ENCODE measurements at regions of chr20 and their contacts with region 1.

Region 1: DNA sequence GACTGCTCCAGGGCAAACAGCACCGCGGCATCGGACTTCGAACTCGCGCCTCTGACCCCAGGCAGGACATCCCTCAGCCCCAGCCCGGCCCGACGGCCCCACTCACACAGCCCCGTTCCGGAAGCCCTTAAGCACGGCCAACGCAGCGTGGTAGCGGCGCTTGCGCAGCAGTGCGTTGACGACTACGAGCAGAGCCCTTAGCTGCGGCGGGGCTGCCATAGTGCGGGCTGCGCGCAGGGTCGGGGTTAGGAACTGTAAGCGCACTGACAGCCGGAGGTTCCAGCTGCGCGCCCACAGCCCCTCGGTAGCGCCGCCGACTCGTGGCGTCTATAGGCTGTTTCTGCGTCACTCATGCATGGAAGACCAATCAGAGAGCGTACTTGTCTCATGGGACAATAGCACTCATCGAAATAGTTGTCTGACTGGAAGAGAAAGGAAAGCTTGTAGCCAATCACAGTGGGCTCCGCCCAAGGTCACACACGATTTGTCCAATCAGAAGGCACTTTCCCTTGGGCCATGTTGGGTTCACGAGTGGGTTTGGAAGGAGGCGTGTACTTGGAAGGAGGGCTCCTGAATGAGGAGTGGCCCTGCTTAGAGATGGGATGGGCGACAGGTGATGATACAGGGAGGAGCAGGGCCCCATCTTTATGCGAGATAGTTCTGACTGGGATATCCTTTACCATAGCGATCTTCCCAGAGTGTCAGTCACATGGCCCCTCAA is at the start of gene PXMP4:
- DNase-seq: peak; percentile 83 to 96
- ATAC-seq: peak; percentile 93 to 98 (median 95)
- H3K4me3 ChIP-seq: peak within 1 kb of the TSS; percentile 79
- H3K4me3 Mint-ChIP-seq: peak within 1 kb of the TSS; percentile 92
- H3K27ac ChIP-seq: peak within 1 kb of the TSS; percentile 64
- H3K27ac Mint-ChIP-seq: peak within 1 kb of the TSS; percentile 87 to 90
- H3K4me1 ChIP-seq: peaks cover 22% of the 10 kb centered on the region
- H3K4me1 Mint-ChIP-seq: peaks cover 20 to 21% of the 10 kb centered on the region in 2 donors
- H3K27me3 ChIP-seq: no peaks in the 10 kb centered on the region
- H3K27me3 Mint-ChIP-seq: no peaks in the 10 kb centered on the region
- CTCF ChIP-seq: no peak
- total RNA-seq, gene PXMP4: 4.7 to 6.6 (median 6.2) TPM

Region 2: GRCh38 chr20:33686100-33686983 is 33.8 kb before region 1 on chr20 and contains the start of gene E2F1:
- intact Hi-C with region 1: loop called (anchors 1 kb)
- DNase-seq: peak; percentile 94 to 95
- ATAC-seq: peak; percentile 91 to 97 (median 96)
- H3K4me3 ChIP-seq: peak within 1 kb of the TSS; percentile 25
- H3K4me3 Mint-ChIP-seq: peak within 1 kb of the TSS; percentile 83
- H3K27ac ChIP-seq: peak within 1 kb of the TSS; percentile 49
- H3K27ac Mint-ChIP-seq: peak within 1 kb of the TSS; percentile 73 to 85
- H3K4me1 ChIP-seq: peaks cover 39% of the 10 kb centered on the region
- H3K4me1 Mint-ChIP-seq: peaks cover 19 to 24% of the 10 kb centered on the region in 2 donors
- H3K27me3 ChIP-seq: no peaks in the 10 kb centered on the region
- H3K27me3 Mint-ChIP-seq: no peaks in the 10 kb centered on the region
- CTCF ChIP-seq: peak; percentile 16
- total RNA-seq, gene E2F1: 4.6 to 5.6 (median 4.7) TPM

Region 3: GRCh38 chr20:33731693-33732165 is 11.6 kb after region 1 on chr20 and contains the start of gene ZNF341:
- intact Hi-C with region 1: loop called (anchors 1 kb)
- DNase-seq: peak; percentile 87 to 93
- ATAC-seq: peak; percentile 87 to 94 (median 88)
- H3K4me3 ChIP-seq: peak within 1 kb of the TSS; percentile 65
- H3K4me3 Mint-ChIP-seq: peak within 1 kb of the TSS; percentile 90
- H3K27ac ChIP-seq: peak within 1 kb of the TSS; percentile 73
- H3K27ac Mint-ChIP-seq: peak within 1 kb of the TSS; percentile 89 to 98
- H3K4me1 ChIP-seq: peaks cover 27% of the 10 kb centered on the region
- H3K4me1 Mint-ChIP-seq: peaks cover 16 to 25% of the 10 kb centered on the region in 2 donors
- H3K27me3 ChIP-seq: no peaks in the 10 kb centered on the region
- H3K27me3 Mint-ChIP-seq: no peaks in the 10 kb centered on the region
- CTCF ChIP-seq: peak; percentile 65
- total RNA-seq, gene ZNF341: 3.6 to 5.1 (median 4.3) TPM

Region 4: DNA sequence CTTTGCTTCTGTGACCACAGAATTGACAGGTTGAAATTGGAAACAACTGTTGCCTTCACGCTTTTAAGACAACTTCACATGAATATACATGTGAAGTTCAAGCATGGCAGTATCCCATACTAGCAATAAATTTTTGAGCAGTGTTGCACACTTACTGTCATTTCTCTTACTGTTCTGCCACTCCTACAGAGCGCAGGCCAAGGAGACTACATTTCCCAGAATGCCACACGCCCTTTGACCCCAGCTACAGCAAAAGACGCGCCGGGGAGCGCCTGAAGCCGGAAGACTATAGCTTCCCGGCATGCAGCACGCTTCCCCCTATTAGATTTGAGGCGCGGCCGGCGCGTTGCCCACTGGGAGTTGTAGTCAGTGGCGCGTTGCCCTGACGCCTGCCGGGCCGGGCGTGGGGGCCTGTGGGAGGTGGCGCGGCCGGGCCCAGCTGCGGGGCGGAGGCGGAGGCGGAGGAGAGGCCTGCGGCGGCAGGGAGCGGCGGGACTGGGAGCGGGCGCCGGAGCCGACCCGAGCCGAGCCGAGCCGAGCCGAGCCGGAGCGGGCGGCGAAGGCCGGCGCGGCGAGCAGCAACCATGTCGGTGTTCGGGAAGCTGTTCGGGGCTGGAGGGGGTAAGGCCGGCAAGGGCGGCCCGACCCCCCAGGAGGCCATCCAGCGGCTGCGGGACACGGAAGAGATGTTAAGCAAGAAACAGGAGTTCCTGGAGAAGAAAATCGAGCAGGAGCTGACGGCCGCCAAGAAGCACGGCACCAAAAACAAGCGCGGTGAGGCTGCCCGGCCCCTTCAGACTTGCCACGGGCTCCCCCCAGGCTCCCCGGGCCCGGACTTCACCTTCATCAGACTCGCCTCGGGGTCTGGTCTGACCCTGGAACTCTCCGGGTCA is 91.0 kb after region 1 on chr20 and contains the start of gene CHMP4B:
- intact Hi-C with region 1: loop called (anchors 1 kb)
- DNase-seq: peak; percentile 96 to 98
- ATAC-seq: peak; percentile 93 to 99 (median 98)
- H3K4me3 ChIP-seq: peak within 1 kb of the TSS; percentile 89
- H3K4me3 Mint-ChIP-seq: peak within 1 kb of the TSS; percentile 92
- H3K27ac ChIP-seq: peak within 1 kb of the TSS; percentile 54
- H3K27ac Mint-ChIP-seq: peak within 1 kb of the TSS; percentile 93 to 98
- H3K4me1 ChIP-seq: peaks cover 30% of the 10 kb centered on the region
- H3K4me1 Mint-ChIP-seq: peaks cover 36 to 38% of the 10 kb centered on the region in 2 donors
- H3K27me3 ChIP-seq: no peaks in the 10 kb centered on the region
- H3K27me3 Mint-ChIP-seq: no peaks in the 10 kb centered on the region
- CTCF ChIP-seq: no peak
- total RNA-seq, gene CHMP4B: 63.7 to 74.0 (median 70.0) TPM

Measured in natural killer cell (primary cell).